Activated CD8-positive, alpha-beta T cell treated with anti-CD3 and anti-CD28 coated beads for 36 hours (primary cell): ENCODE measurements at regions of chr11 and their contacts with region 1.

Region 1: GRCh38 chr11:119481021-119481666 is 58.2 kb upstream of the THY1 start:
- DNase-seq: peak; percentile 80
- ATAC-seq: peak; percentile 87
- H3K4me3 Mint-ChIP-seq: no peak overlapping the region
- H3K27ac Mint-ChIP-seq: no peak overlapping the region
- H3K4me1 Mint-ChIP-seq: no peaks in the 10 kb centered on the region
- H3K27me3 Mint-ChIP-seq: peaks cover 6% of the 10 kb centered on the region
- CTCF ChIP-seq: peak; percentile 99

Region 2: DNA sequence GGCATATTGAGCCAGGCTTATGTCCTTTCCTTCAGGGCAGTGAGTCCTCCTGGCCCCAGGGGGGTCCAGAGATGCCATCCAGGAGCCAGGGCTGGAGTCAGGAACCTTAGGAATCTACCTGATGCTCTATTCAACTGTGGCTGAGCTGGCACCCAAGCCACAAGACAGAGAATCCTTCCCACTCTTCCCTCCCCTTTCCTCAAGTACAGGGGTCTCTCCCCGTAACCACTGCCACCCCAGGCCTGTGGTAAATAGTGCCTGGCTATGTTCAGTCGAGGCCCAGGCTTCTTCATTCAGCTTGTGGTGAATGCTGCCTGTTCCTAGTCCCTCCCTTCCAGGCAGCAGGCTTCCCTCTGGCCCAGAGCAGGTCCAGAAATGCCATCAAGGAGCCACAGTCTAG is 12.6 kb before region 1 on chr11:
- CTCF ChIA-PET with region 1: no interaction called
- POLR2A ChIA-PET with region 1: no interaction called
- intact Hi-C with region 1: no loop called
- DNase-seq: no peak
- ATAC-seq: no peak
- H3K4me3 Mint-ChIP-seq: no peak overlapping the region
- H3K27ac Mint-ChIP-seq: no peak overlapping the region
- H3K4me1 Mint-ChIP-seq: no peaks in the 10 kb centered on the region
- H3K27me3 Mint-ChIP-seq: peaks cover 31% of the 10 kb centered on the region
- CTCF ChIP-seq: no peak

Region 3: GRCh38 chr11:119533921-119534736 is 53.0 kb after region 1 on chr11:
- CTCF ChIA-PET with region 1: interaction called, 18 read pairs
- POLR2A ChIA-PET with region 1: no interaction called
- intact Hi-C with region 1: loop called (anchors 5 kb)
- DNase-seq: peak; percentile 74
- ATAC-seq: peak; percentile 82
- H3K4me3 Mint-ChIP-seq: no peak overlapping the region
- H3K27ac Mint-ChIP-seq: no peak overlapping the region
- H3K4me1 Mint-ChIP-seq: no peaks in the 10 kb centered on the region
- H3K27me3 Mint-ChIP-seq: peaks cover 7% of the 10 kb centered on the region
- CTCF ChIP-seq: peak; percentile 98